Activated CD4-positive, alpha-beta T cell treated with anti-CD3 and anti-CD28 coated beads for 36 hours (primary cell): ENCODE measurements at regions of chr12 and their contacts with region 1.

Region 1: GRCh38 chr12:50074936-50075807 is 10.0 kb upstream of the SMARCD1 start:
- DNase-seq: peak; percentile 90
- ATAC-seq: peak; percentile 98
- H3K4me3 Mint-ChIP-seq: no peak overlapping the region
- H3K27ac Mint-ChIP-seq: no peak overlapping the region
- H3K4me1 Mint-ChIP-seq: peaks cover 8% of the 10 kb centered on the region
- H3K27me3 Mint-ChIP-seq: no peaks in the 10 kb centered on the region

Region 2: GRCh38 chr12:49945394-49946080 is 129.6 kb before region 1 on chr12:
- CTCF ChIA-PET with region 1: interaction called, 15 read pairs
- POLR2A ChIA-PET with region 1: no interaction called
- intact Hi-C with region 1: no loop called
- DNase-seq: peak; percentile 94
- ATAC-seq: peak; percentile 100
- H3K4me3 Mint-ChIP-seq: peak overlapping the region; percentile 74
- H3K27ac Mint-ChIP-seq: peak overlapping the region; percentile 95
- H3K4me1 Mint-ChIP-seq: peaks cover 19% of the 10 kb centered on the region
- H3K27me3 Mint-ChIP-seq: no peaks in the 10 kb centered on the region

Region 3: DNA sequence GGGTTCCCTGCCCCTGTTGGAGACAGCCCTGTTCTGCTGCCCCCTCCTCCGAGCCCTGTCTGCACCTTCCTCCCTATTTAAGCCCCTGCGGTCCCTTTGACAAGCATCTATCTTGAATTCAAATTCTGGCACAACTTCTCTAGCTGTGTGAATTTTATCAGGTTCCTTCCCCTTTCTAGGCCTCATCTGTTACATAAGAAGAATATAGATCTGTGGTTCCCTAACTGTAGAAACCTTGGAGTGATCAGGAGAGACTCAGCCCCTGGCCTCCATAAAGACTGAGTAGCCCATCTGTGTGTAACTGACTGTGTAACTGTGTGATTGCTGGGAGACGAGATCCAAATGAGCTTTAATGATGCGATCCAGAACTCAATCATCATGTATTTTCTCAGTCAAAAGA is 36.8 kb before region 1 on chr12:
- CTCF ChIA-PET with region 1: interaction called, 146 read pairs
- POLR2A ChIA-PET with region 1: no interaction called
- intact Hi-C with region 1: loop called (anchors 1 kb)
- DNase-seq: no peak
- ATAC-seq: no peak
- H3K4me3 Mint-ChIP-seq: no peak overlapping the region
- H3K27ac Mint-ChIP-seq: no peak overlapping the region
- H3K4me1 Mint-ChIP-seq: peaks cover 14% of the 10 kb centered on the region
- H3K27me3 Mint-ChIP-seq: peaks cover 4% of the 10 kb centered on the region

Region 4: GRCh38 chr12:50043854-50044253 is 31.3 kb before region 1 on chr12:
- CTCF ChIA-PET with region 1: interaction called, 146 read pairs
- POLR2A ChIA-PET with region 1: no interaction called
- intact Hi-C with region 1: loop called (anchors 1 kb)
- DNase-seq: peak; percentile 20
- ATAC-seq: peak; percentile 63
- H3K4me3 Mint-ChIP-seq: no peak overlapping the region
- H3K27ac Mint-ChIP-seq: peak overlapping the region; percentile 14
- H3K4me1 Mint-ChIP-seq: peaks cover 27% of the 10 kb centered on the region
- H3K27me3 Mint-ChIP-seq: peaks cover 5% of the 10 kb centered on the region

Region 5: DNA sequence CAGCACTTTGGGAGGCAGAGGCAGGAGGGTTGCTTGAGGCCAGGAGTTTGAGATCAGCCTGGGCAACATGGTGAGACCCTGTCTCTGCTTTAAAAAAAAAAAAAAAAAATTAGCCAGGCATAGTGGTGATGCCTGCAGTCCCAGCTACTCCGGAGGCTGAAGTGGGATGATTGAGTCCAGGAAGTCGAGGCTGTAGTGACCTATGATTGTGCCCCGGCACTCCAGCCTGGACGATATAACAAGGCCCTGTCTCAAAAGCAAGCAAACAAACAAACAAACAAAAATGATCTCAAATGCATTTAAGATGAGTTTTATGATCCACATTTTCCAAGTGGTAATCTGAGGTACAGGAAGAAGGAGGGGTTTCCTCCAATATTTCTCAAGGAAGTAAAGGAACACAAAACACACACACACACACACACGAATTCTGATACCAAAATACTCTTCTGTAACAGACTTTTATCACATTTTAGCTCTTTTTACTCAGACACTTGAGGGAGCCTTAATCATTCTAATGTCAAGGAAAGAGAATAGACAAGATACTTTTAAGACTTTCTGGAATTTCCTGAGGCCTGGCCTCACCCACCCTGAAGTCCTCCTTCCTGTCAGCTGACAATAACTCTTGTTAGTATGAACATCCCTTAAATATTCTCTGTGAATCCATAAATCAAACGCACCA is 136.4 kb after region 1 on chr12:
- CTCF ChIA-PET with region 1: no interaction called
- POLR2A ChIA-PET with region 1: interaction called, 11 read pairs
- intact Hi-C with region 1: no loop called
- DNase-seq: no peak
- ATAC-seq: peak; percentile 45
- H3K4me3 Mint-ChIP-seq: peak overlapping the region; percentile 12
- H3K27ac Mint-ChIP-seq: peak overlapping the region; percentile 96
- H3K4me1 Mint-ChIP-seq: peaks cover 46% of the 10 kb centered on the region
- H3K27me3 Mint-ChIP-seq: no peaks in the 10 kb centered on the region

Region 6: GRCh38 chr12:50314629-50315312 is 239.6 kb after region 1 on chr12:
- CTCF ChIA-PET with region 1: no interaction called
- POLR2A ChIA-PET with region 1: no interaction called
- intact Hi-C with region 1: loop called (anchors 1 to 10 kb)
- DNase-seq: no peak
- ATAC-seq: no peak
- H3K4me3 Mint-ChIP-seq: no peak overlapping the region
- H3K27ac Mint-ChIP-seq: no peak overlapping the region
- H3K4me1 Mint-ChIP-seq: peaks cover 7% of the 10 kb centered on the region
- H3K27me3 Mint-ChIP-seq: no peaks in the 10 kb centered on the region